Upper lobe of right lung (tissue), 1 donor: ENCODE measurements at regions of chr4 and their contacts with region 1.

Region 1: GRCh38 chr4:80963051-80963450 is 67.5 kb upstream of the BMP3 start:
- DNase-seq: no peak
- ATAC-seq: no peak
- H3K4me3 ChIP-seq: no peak overlapping the region
- H3K27ac ChIP-seq: no peak overlapping the region
- H3K4me1 ChIP-seq: no peaks in the 10 kb centered on the region
- H3K27me3 ChIP-seq: no peaks in the 10 kb centered on the region
- CTCF ChIP-seq: no peak

Region 2: DNA sequence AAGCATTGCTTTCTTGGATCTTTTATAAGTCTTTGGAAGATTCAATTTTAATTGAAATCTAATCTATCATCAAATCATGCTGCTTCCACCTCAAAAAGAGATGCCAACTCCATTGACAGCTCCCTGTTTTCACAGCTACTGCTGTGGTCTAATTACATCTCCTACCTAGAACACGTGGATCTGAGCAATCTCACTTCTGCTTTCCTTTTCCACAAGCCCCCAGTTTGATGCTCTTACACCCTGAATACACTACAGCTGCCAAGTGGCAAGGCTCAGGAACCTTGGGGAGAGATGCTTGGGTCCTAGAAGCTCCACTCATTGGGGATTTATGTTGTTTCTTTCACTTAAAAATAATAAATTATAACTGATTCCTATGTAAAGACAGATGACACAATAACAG is 455.5 kb before region 1 on chr4:
- intact Hi-C with region 1: loop called (anchors 10 kb)
- DNase-seq: no peak
- ATAC-seq: no peak
- H3K4me3 ChIP-seq: no peak overlapping the region
- H3K27ac ChIP-seq: no peak overlapping the region
- H3K4me1 ChIP-seq: no peaks in the 10 kb centered on the region
- H3K27me3 ChIP-seq: no peaks in the 10 kb centered on the region
- CTCF ChIP-seq: no peak

Region 3: GRCh38 chr4:81197864-81198524 is 234.9 kb after region 1 on chr4:
- intact Hi-C with region 1: no loop called
- DNase-seq: no peak
- ATAC-seq: no peak
- H3K4me3 ChIP-seq: no peak overlapping the region
- H3K27ac ChIP-seq: no peak overlapping the region
- H3K4me1 ChIP-seq: no peaks in the 10 kb centered on the region
- H3K27me3 ChIP-seq: no peaks in the 10 kb centered on the region
- CTCF ChIP-seq: no peak